ENCODE measurements at regions of chr7 and their contacts with region 1.

Region 1: DNA sequence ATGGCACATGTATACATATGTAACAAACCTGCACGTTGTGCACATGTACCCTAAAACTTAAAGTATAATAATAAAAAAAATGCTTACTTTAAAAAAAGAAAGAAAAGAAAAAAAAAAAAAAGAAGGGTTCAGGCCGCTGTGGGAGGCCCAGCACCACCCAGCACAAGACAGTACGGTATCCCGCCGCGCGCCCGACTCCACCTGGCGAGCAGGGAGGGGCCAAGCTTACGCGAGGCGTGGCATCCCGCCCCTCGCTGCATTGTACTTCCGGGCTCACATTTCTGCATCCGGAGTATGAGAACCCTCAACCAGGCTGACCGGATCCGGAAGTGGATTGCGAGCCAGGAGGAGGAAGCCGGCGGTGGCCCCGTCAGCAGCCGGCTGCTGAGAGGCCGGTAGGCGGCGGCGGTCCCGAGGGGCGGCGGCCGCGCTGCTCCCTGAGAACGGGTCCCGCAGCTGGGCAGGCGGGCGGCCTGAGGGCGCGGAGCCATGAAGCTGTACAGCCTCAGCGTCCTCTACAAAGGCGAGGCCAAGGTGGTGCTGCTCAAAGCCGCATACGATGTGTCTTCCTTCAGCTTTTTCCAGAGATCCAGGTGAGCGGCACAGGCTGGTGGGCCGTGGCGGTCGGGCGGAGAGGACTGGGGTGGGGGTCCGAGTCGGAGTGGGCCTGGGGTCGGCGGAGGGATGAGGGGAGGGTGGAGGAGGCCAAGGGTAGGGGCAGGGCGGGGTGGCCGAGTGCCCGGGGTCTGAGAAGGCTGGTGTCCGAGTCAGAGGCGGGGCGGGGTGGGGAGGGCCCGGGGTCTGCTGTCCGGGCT is at the start of gene YKT6:
- DNase-seq: peak; percentile 96
- ATAC-seq: peak; percentile 98
- total RNA-seq, gene YKT6: 58.0 TPM

Region 2: GRCh38 chr7:44072364-44073231 is 128.3 kb before region 1 on chr7:
- intact Hi-C with region 1: loop called (anchors 2 kb)
- DNase-seq: peak; percentile 87
- ATAC-seq: peak; percentile 26